ENCODE measurements at regions of chr1 and their contacts with region 1.

Region 1: DNA sequence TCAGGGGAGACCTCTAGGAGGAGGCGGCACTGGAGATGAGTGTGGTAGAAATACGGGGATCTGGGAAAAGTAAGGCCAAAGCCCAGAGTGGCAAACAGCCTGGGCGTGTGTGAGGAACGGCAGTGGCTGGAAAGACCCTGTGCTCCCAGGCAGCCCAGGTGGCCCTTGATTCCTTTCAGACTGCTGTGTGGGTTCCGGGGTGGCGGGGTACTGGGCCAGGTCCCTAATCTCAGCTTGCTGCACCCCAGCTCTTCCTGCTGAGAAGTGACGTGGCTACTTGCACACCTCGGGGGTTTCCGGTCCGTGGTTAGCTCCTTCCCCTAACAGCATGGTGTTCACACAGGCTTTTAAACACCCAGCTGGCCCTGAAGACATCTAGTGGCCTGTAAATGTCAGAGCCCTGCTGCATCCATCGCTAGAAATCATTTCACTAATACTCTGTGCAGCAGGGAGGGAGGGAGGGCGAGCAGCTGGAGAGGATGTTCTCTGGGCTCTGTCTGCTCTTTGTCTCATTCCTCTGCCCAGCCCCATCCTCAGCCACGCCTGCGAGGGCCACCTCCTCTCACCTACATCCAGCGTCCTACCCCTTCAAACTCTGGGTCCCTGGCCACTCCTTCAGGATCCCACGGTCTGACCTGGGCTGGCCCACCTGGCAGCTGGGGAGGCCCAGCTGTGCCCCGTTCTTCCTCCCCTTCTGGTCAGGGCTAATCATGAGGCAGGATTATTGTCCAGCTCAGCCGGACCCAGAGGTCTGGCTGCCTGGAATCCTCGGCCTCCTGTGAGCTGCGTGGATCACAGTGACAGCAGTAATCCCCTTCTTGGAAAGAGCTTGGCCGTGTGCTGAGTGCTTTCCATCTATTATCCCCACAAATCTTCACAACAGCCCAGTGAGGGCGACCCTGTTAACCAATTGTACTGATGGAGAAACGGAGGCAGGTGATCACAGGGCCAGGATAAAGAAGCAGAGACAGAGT is 7.2 kb downstream of the ZDHHC18 start:
- DNase-seq: peak; percentile 88 to 96 (median 90)
- H3K4me3 ChIP-seq: peak overlapping the region; percentile 50
- H3K4me3 Mint-ChIP-seq: peak overlapping the region; percentile 31 to 84 (median 71)
- H3K27ac ChIP-seq: peak overlapping the region; percentile 85
- H3K27ac Mint-ChIP-seq: peak overlapping the region; percentile 98 to 100 (median 100)
- H3K4me1 ChIP-seq: peaks cover 58% of the 10 kb centered on the region
- H3K4me1 Mint-ChIP-seq: peaks cover 68 to 76% (median 76%) of the 10 kb centered on the region in 3 donors
- H3K27me3 ChIP-seq: no peaks in the 10 kb centered on the region
- H3K27me3 Mint-ChIP-seq: peaks cover 0 to 2% of the 10 kb centered on the region in 2 donors

Region 2: DNA sequence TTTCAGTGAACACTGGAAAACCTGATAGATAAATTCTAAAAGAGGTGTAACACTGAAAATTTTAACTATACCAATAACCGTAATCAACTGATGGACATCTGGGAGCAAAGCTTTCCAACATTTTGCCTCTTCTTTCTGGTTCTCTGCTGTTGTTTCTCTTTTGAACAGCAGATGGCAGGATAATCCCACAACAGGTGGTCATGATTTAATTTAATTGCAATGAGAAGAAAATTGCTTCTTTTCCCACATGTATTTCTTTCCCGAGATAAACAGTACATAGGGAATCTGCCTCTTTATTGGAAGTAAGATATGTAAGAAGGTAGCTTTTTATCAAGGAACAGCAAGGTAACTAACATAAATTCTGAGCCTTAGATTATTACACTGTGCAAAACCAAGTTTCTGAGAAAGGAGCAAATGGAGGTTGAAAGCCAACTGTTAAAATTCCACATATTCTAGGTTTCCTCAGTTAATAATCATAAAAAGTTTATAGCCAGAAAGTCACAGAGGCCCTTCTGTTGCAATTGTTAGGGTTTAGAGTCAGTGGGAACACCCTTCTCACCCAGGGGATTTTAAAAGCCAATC is 231.2 kb before region 1 on chr1:
- CTCF ChIA-PET with region 1: interaction called, 15 read pairs
- POLR2A ChIA-PET with region 1: interaction called, 6 read pairs
- DNase-seq: peak in 3 of 5 donors; percentile 30 to 61 (median 56)
- H3K4me3 ChIP-seq: no peak overlapping the region
- H3K4me3 Mint-ChIP-seq: no peak overlapping the region
- H3K27ac ChIP-seq: no peak overlapping the region
- H3K27ac Mint-ChIP-seq: no peak overlapping the region
- H3K4me1 ChIP-seq: peaks cover 8% of the 10 kb centered on the region
- H3K4me1 Mint-ChIP-seq: peaks cover 7 to 10% (median 9%) of the 10 kb centered on the region in 3 donors
- H3K27me3 ChIP-seq: no peaks in the 10 kb centered on the region
- H3K27me3 Mint-ChIP-seq: peaks cover 0 to 2% of the 10 kb centered on the region in 2 donors

Region 3: DNA sequence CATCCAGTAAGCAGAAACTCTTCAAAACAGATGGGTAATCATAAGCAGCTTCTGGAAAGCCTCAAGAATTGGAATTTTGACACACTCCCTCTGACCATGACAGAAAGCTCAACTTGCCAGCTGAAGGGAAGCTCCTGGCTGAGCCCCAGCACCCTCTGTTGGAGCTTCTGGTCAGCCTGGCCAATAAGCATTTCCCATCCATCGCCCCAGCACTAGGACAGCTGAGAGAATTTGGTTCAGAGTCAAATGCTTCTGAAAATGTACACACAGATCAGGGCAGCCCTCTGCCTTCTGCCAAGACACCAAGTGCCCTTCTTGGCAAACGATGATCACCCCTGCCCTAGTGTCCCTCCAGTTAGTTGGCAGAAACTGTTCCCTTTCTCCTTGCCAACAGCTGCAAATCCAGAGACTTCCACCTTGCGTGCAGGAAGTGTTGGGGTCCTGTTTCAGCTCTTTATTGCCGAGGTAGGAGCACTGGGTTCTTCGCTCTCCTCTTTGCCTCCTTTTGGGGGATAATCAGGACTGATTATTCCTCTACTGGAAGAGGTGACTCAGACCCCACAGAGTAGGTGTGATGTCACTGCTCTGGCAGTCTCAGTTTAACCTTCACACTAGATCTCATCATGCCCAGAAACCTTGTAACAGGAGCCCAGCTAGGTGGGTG is 34.1 kb before region 1 on chr1:
- CTCF ChIA-PET with region 1: interaction called, 15 read pairs
- POLR2A ChIA-PET with region 1: interaction called, 8 read pairs
- DNase-seq: peak in 1 of 5 donors; percentile 55
- H3K4me3 ChIP-seq: peak overlapping the region; percentile 10
- H3K4me3 Mint-ChIP-seq: peak overlapping the region; percentile 4 to 83 (median 77)
- H3K27ac ChIP-seq: peak overlapping the region; percentile 65
- H3K27ac Mint-ChIP-seq: peak overlapping the region; percentile 94 to 98 (median 97)
- H3K4me1 ChIP-seq: peaks cover 37% of the 10 kb centered on the region
- H3K4me1 Mint-ChIP-seq: peaks cover 38 to 59% (median 55%) of the 10 kb centered on the region in 3 donors
- H3K27me3 ChIP-seq: no peaks in the 10 kb centered on the region
- H3K27me3 Mint-ChIP-seq: no peaks in the 10 kb centered on the region

Region 4: GRCh38 chr1:26811057-26811456 is 22.7 kb before region 1 on chr1:
- CTCF ChIA-PET with region 1: interaction called, 68 read pairs
- POLR2A ChIA-PET with region 1: interaction called, 12 read pairs
- DNase-seq: peak in 1 of 5 donors; percentile 60
- H3K4me3 ChIP-seq: no peak overlapping the region
- H3K4me3 Mint-ChIP-seq: peak overlapping the region; percentile 11 to 76 (median 55)
- H3K27ac ChIP-seq: no peak overlapping the region
- H3K27ac Mint-ChIP-seq: peak overlapping the region; percentile 59 to 96 (median 92)
- H3K4me1 ChIP-seq: peaks cover 11% of the 10 kb centered on the region
- H3K4me1 Mint-ChIP-seq: peaks cover 21% of the 10 kb centered on the region in 3 donors
- H3K27me3 ChIP-seq: no peaks in the 10 kb centered on the region
- H3K27me3 Mint-ChIP-seq: no peaks in the 10 kb centered on the region

Region 5: DNA sequence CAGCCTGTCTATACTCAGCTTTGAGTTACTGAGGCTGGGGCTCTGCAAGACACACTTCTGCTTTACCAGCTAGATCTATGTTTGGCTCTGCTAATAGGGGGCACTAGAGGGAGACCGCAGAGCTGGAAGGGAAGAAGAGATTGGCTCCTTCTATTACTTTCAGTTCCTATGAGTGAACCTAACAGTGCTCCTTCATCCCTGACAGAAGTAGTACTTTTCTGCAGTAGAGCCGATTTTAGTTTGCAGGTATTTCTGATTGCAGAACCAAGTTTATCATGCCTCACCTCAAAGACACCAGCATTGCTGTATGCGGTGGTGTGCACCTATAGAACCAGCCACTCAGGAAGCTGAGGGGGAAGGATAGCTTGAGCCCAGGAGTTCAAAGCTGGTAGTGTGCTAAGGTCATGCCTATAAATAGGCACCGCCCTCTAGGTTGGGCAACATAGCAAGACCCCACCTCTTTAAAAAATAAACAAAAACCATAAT is 12.9 kb before region 1 on chr1:
- CTCF ChIA-PET with region 1: interaction called, 79 read pairs
- POLR2A ChIA-PET with region 1: interaction called, 9 read pairs
- DNase-seq: peak in 2 of 5 donors; percentile 53 to 61
- H3K4me3 ChIP-seq: peak overlapping the region; percentile 26
- H3K4me3 Mint-ChIP-seq: peak overlapping the region; percentile 81 to 88 (median 84)
- H3K27ac ChIP-seq: no peak overlapping the region
- H3K27ac Mint-ChIP-seq: peak overlapping the region; percentile 87 to 95 (median 91)
- H3K4me1 ChIP-seq: peaks cover 22% of the 10 kb centered on the region
- H3K4me1 Mint-ChIP-seq: peaks cover 14 to 36% (median 25%) of the 10 kb centered on the region in 3 donors
- H3K27me3 ChIP-seq: no peaks in the 10 kb centered on the region
- H3K27me3 Mint-ChIP-seq: no peaks in the 10 kb centered on the region

Region 6: DNA sequence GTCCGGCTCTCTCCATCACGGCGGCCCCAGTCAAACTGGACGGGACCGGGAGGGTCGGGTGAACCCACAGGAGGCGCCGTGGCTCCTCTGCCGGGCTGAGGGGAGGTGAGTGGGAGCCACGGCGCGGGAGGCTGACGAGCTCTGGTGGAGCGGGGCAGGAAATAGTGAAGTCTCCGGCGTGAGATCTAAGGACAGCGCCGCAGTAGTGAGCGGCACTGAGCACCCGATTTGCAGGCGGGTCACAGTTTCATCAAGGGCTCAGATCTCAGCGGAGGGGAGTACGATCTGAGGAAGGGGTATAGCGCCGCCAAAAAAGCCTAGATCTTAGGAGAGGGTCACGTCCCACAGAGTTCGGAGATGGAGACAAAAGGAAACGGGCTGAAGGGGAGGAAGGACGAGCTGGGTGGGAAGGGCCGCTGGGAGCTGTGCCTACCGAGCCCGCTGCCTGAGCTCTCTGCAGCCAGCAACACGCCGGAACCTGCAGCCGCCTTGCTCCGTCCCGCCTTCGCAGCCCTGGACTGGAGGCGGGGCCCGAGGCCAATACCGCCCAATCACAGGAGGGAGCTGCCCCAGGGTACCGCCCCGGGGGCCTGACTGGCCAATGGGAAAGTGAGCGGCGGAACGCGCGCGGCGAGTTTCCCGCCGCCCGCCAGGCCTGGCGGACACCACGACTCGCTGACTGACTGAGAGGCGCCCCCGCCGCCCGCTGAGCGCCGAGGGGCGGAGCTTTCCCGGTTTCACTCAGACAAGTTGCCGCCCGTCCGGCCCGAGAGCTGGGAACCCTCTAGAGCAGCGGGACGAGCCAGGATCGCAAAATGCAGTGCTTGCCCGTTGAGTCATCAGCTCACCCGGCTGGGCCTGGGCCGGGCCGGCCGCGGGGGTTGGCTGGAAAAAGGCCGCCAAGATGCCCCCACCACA is 31.1 kb after region 1 on chr1:
- CTCF ChIA-PET with region 1: interaction called, 15 read pairs
- POLR2A ChIA-PET with region 1: interaction called, 11 read pairs
- DNase-seq: peak; percentile 91 to 95 (median 94)
- H3K4me3 ChIP-seq: peak overlapping the region; percentile 97
- H3K4me3 Mint-ChIP-seq: peak overlapping the region; percentile 88 to 97 (median 93)
- H3K27ac ChIP-seq: peak overlapping the region; percentile 83
- H3K27ac Mint-ChIP-seq: peak overlapping the region; percentile 73 to 98 (median 92)
- H3K4me1 ChIP-seq: peaks cover 11% of the 10 kb centered on the region
- H3K4me1 Mint-ChIP-seq: peaks cover 14 to 28% (median 27%) of the 10 kb centered on the region in 3 donors
- H3K27me3 ChIP-seq: no peaks in the 10 kb centered on the region
- H3K27me3 Mint-ChIP-seq: no peaks in the 10 kb centered on the region

Region 7: GRCh38 chr1:26877326-26877725 is 43.6 kb after region 1 on chr1:
- CTCF ChIA-PET with region 1: interaction called, 12 read pairs
- POLR2A ChIA-PET with region 1: no interaction called
- DNase-seq: no peak
- H3K4me3 ChIP-seq: no peak overlapping the region
- H3K4me3 Mint-ChIP-seq: no peak overlapping the region
- H3K27ac ChIP-seq: no peak overlapping the region
- H3K27ac Mint-ChIP-seq: peak overlapping the region in 1 of 8 donors; percentile 61
- H3K4me1 ChIP-seq: no peaks in the 10 kb centered on the region
- H3K4me1 Mint-ChIP-seq: no peaks in the 10 kb centered on the region
- H3K27me3 ChIP-seq: no peaks in the 10 kb centered on the region
- H3K27me3 Mint-ChIP-seq: no peaks in the 10 kb centered on the region

Region 8: DNA sequence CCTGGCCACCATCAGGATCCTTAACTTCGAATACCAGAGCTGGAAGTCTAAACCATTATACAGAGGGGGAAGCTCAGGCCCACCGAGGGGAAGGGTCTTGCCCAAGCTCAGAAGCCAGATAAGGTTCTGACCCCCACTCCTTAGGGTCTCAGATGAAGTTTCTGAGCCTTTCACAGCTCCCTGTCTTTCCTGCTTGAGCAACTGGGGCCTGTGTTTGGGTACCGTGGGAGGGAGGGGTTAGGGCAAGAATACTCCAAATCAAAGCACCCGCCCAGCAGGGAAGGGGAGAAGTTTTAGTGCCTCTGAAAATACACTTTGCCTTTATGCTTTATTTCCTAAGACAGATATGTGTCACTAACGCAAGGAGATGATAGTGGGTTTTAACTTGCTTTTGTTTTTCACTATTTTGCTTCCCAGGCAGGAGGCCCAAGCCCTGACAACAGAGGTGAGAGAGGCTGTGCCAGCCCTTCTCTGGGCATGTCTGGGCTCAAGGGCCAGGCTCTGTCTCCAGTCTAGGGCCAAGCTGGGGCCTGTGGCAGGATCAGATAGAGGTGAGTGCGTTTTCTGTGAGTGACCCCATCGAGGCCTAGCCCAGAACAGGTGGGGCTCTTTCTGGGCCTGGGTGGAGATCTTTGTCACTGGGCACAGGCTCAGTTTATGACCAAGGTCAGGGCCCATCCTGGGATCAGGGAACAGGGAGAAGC is 199.5 kb after region 1 on chr1:
- CTCF ChIA-PET with region 1: no interaction called
- POLR2A ChIA-PET with region 1: no interaction called
- DNase-seq: no peak
- H3K4me3 ChIP-seq: no peak overlapping the region
- H3K4me3 Mint-ChIP-seq: no peak overlapping the region
- H3K27ac ChIP-seq: no peak overlapping the region
- H3K27ac Mint-ChIP-seq: peak overlapping the region in 1 of 8 donors; percentile 32
- H3K4me1 ChIP-seq: no peaks in the 10 kb centered on the region
- H3K4me1 Mint-ChIP-seq: no peaks in the 10 kb centered on the region
- H3K27me3 ChIP-seq: no peaks in the 10 kb centered on the region
- H3K27me3 Mint-ChIP-seq: peaks cover 16 to 18% of the 10 kb centered on the region in 2 donors

Measured in CD8-positive, alpha-beta memory T cell (primary cell).